ENCODE measurements at regions of chr16 and their contacts with region 1.

Region 1: DNA sequence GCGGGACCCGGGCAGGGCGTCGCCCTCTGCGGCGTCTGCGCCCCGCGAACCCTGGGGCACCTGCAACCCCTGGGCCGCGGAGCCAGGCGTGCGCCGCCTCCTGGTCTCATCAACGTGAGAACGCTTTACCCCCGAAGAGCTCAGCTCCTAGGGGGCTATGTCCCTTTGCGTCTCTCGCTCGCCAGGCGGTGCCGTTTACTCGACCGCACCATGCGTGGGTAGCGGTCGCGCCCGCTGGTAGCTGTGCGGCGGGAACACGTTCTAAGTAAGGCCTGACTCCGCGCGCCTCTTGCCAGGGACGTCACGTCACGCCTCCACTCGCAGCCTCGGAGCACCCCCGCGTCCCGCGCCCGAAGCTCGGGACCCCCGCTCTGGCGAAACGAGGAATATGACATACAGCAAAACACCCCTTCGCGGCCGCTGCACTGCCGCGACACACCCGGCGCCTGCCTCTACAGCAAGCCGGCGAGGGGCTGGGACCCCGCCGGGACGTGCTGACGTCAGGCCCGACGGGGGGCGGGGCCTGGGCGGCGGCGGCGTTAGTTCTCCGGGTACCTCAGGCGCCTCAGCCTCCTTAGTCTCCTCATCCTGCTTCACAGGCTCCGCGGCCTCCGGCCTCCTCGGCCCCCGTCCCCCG is at the start of gene RAB11FIP3:
- DNase-seq: peak; percentile 80 to 91 (median 87)
- ATAC-seq: peak; percentile 94
- H3K4me3 ChIP-seq: peak within 1 kb of the TSS; percentile 83
- H3K4me3 Mint-ChIP-seq: peak within 1 kb of the TSS; percentile 78 to 92 (median 88)
- H3K27ac ChIP-seq: peak within 1 kb of the TSS; percentile 92
- H3K27ac Mint-ChIP-seq: peak within 1 kb of the TSS in 8 of 9 donors; percentile 78 to 95 (median 90)
- H3K4me1 ChIP-seq: peaks cover 10 to 17% of the 10 kb centered on the region in 2 donors
- H3K4me1 Mint-ChIP-seq: peaks cover 22 to 39% (median 32%) of the 10 kb centered on the region in 7 donors
- H3K27me3 ChIP-seq: no peaks in the 10 kb centered on the region
- H3K27me3 Mint-ChIP-seq: peaks cover 0 to 18% (median 0%) of the 10 kb centered on the region in 5 donors
- total RNA-seq, gene RAB11FIP3: 37.9 to 53.0 (median 45.5) TPM

Region 2: GRCh38 chr16:138049-138417 is 287.2 kb before region 1 on chr16:
- CTCF ChIA-PET with region 1: no interaction called
- POLR2A ChIA-PET with region 1: no interaction called
- intact Hi-C with region 1: loop called in 1 of 2 experiments (anchors 1 kb)
- DNase-seq: peak in 7 of 9 donors; percentile 10 to 55 (median 23)
- ATAC-seq: peak; percentile 24
- H3K4me3 ChIP-seq: peak overlapping the region; percentile 58
- H3K4me3 Mint-ChIP-seq: peak overlapping the region; percentile 74 to 90 (median 84)
- H3K27ac ChIP-seq: peak overlapping the region; percentile 68
- H3K27ac Mint-ChIP-seq: peak overlapping the region in 7 of 9 donors; percentile 11 to 94 (median 75)
- H3K4me1 ChIP-seq: peaks cover 6% of the 10 kb centered on the region in 2 donors
- H3K4me1 Mint-ChIP-seq: peaks cover 9 to 47% (median 26%) of the 10 kb centered on the region in 7 donors
- H3K27me3 ChIP-seq: no peaks in the 10 kb centered on the region
- H3K27me3 Mint-ChIP-seq: peaks cover 0 to 6% (median 0%) of the 10 kb centered on the region in 5 donors

Region 3: DNA sequence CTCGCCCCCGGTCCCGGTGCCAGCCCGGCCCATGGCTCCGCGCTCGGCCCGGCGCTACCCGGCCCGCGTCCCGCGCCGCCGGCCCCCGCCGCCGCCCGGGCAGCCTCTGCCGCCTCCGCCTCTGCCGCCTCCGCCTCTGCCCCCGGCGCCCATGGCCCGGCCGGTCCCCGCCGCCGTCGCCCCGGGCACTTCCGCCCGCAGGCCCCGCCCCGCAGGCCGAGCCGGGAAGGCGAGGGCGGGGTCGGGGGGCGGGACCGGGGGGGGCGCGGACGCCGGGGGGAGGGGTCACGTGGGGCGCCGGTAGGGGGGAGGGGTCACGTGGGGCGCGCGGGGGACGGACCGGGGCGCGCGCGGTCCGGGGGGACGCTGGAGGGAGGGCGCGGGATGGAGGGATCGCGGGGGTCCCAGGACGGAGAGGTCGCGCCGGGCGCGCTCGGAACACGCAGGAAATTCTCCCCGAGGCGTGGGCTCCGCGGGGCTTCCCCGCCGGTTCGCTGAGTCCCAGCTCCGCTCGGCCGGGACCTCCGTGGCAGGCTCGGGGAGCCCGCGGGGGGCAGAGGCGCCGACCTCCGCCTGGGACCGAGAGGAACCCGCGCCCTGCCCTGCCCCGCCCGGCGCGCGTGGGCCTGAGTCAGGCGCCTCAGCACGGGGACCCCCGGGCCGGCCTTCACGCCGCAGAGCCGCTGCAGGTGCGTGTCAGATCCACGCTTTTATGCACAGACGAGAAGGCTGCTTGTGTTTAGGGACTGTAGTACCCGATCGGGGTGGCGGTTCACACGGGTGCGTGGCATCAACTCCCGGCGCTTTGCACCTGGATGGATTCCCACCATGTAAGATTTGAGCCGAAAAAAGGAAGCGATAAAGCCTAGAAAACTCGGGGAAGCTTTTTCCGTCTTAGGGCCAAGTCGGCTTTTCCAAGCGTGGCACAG is 43.1 kb before region 1 on chr16 and contains the start of gene PGAP6:
- CTCF ChIA-PET with region 1: no interaction called
- POLR2A ChIA-PET with region 1: interaction called, 3 read pairs
- intact Hi-C with region 1: loop called in 1 of 2 experiments (anchors 1 kb)
- DNase-seq: peak; percentile 36 to 83 (median 51)
- ATAC-seq: peak; percentile 83
- H3K4me3 ChIP-seq: peak within 1 kb of the TSS; percentile 79
- H3K4me3 Mint-ChIP-seq: peak within 1 kb of the TSS; percentile 85 to 97 (median 90)
- H3K27ac ChIP-seq: peak within 1 kb of the TSS; percentile 81
- H3K27ac Mint-ChIP-seq: peak within 1 kb of the TSS; percentile 58 to 98 (median 90)
- H3K4me1 ChIP-seq: peaks cover 18 to 23% of the 10 kb centered on the region in 2 donors
- H3K4me1 Mint-ChIP-seq: peaks cover 7 to 32% (median 21%) of the 10 kb centered on the region in 7 donors
- H3K27me3 ChIP-seq: no peaks in the 10 kb centered on the region
- H3K27me3 Mint-ChIP-seq: peaks cover 0 to 11% (median 0%) of the 10 kb centered on the region in 5 donors
- total RNA-seq, gene PGAP6: 32.2 to 107 (median 89.4) TPM

Region 4: GRCh38 chr16:527006-527753 is 102.0 kb after region 1 on chr16 and contains the start of gene CAPN15:
- CTCF ChIA-PET with region 1: interaction called, 4 read pairs
- POLR2A ChIA-PET with region 1: no interaction called
- intact Hi-C with region 1: loop called (anchors 1 kb)
- DNase-seq: peak; percentile 79 to 93 (median 89)
- ATAC-seq: peak; percentile 91
- H3K4me3 ChIP-seq: peak within 1 kb of the TSS; percentile 78
- H3K4me3 Mint-ChIP-seq: peak within 1 kb of the TSS; percentile 83 to 93 (median 88)
- H3K27ac ChIP-seq: peak within 1 kb of the TSS; percentile 97
- H3K27ac Mint-ChIP-seq: peak within 1 kb of the TSS; percentile 68 to 93 (median 83)
- H3K4me1 ChIP-seq: peaks cover 26 to 28% of the 10 kb centered on the region in 2 donors
- H3K4me1 Mint-ChIP-seq: peaks cover 21 to 38% (median 30%) of the 10 kb centered on the region in 7 donors
- H3K27me3 ChIP-seq: no peaks in the 10 kb centered on the region
- H3K27me3 Mint-ChIP-seq: no peaks in the 10 kb centered on the region
- total RNA-seq, gene CAPN15: 51.0 to 89.8 (median 55.6) TPM